ENCODE measurements at regions of chr6 and their contacts with region 1.

Region 1: GRCh38 chr6:122839477-122839876 is 50.4 kb downstream of the SMPDL3A start:
- DNase-seq: peak; percentile 57
- ATAC-seq: peak; percentile 57
- H3K4me3 Mint-ChIP-seq: no peak overlapping the region
- H3K27ac Mint-ChIP-seq: no peak overlapping the region
- H3K4me1 Mint-ChIP-seq: no peaks in the 10 kb centered on the region
- H3K27me3 Mint-ChIP-seq: peaks cover 9% of the 10 kb centered on the region

Region 2: GRCh38 chr6:122730775-122731386 is 108.6 kb before region 1 on chr6:
- CTCF ChIA-PET with region 1: interaction called, 36 read pairs
- DNase-seq: no peak
- ATAC-seq: no peak
- H3K4me3 Mint-ChIP-seq: no peak overlapping the region
- H3K27ac Mint-ChIP-seq: no peak overlapping the region
- H3K4me1 Mint-ChIP-seq: no peaks in the 10 kb centered on the region
- H3K27me3 Mint-ChIP-seq: peaks cover 16% of the 10 kb centered on the region

Region 3: DNA sequence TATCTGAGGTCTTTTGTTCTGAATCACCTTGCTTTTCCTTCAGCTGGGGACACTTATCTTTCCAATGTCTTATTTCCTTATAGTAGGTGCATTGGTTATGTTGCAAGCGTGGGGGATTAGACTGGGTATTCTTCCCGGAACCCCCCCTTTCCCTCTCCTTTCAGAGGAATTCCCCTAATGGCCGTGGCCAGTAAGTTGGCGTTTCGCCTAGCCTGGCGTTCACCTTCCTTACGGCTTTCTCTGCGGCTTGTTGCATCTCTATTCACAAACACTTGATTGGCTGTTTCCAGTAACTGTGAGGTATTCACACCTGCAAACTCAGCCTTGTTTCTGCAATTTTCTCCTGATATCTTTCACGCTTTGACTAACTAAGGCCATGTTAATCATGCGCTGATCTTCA is 92.8 kb before region 1 on chr6:
- CTCF ChIA-PET with region 1: interaction called, 15 read pairs
- DNase-seq: no peak
- ATAC-seq: no peak
- H3K4me3 Mint-ChIP-seq: no peak overlapping the region
- H3K27ac Mint-ChIP-seq: no peak overlapping the region
- H3K4me1 Mint-ChIP-seq: peaks cover 11% of the 10 kb centered on the region
- H3K27me3 Mint-ChIP-seq: no peaks in the 10 kb centered on the region